Left lung (tissue), 14 donors: ENCODE measurements at regions of chr21 and their contacts with region 1.

Region 1: DNA sequence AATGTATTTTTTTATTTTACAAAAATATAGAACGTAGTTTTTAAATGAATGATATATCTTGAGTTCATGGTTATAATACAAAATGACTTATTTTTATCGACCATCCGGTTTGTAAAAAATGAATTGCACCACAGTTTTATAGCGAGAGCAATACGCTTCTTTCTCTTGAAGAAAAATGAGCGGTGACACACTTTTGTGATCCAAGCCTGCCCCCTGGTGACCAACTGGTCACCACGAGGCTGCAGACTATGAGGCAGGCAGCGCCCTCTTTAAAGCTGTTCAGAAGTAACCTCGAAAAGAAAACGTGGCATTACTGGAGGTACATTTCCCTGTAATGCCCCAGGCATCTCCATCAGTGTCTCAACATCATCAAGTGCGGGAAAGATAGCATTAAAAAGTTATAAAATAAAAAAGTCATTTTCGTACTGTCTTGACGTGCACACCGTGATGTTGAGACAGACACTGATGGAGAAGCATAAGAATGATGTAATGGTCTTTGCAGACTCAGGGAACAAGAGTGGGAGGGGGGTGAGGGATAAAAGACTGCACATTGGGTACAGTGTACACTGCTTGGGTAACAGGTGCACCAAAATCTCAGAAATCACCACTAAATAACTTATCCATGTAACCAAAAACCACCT is 734.2 kb upstream of the ADAMTS5 start:
- DNase-seq: peak; percentile 72 to 91 (median 78)
- ATAC-seq: peak; percentile 96
- H3K4me3 ChIP-seq: no peak overlapping the region
- H3K27ac ChIP-seq: no peak overlapping the region
- H3K4me1 ChIP-seq: no peaks in the 10 kb centered on the region
- H3K27me3 ChIP-seq: no peaks in the 10 kb centered on the region
- CTCF ChIP-seq: peak; percentile 61 to 82

Region 2: GRCh38 chr21:28745131-28746016 is 1044.3 kb after region 1 on chr21:
- intact Hi-C with region 1: loop called in 1 of 2 experiments (anchors 10 kb)
- DNase-seq: peak; percentile 29 to 89 (median 75)
- ATAC-seq: peak; percentile 98
- H3K4me3 ChIP-seq: peak overlapping the region; percentile 17 to 37
- H3K27ac ChIP-seq: peak overlapping the region; percentile 47 to 56
- H3K4me1 ChIP-seq: peaks cover 0 to 12% of the 10 kb centered on the region in 2 donors
- H3K27me3 ChIP-seq: no peaks in the 10 kb centered on the region
- CTCF ChIP-seq: peak; percentile 77 to 87